PC-3 (cell line): ENCODE measurements at regions of chr5 and their contacts with region 1.

Region 1: DNA sequence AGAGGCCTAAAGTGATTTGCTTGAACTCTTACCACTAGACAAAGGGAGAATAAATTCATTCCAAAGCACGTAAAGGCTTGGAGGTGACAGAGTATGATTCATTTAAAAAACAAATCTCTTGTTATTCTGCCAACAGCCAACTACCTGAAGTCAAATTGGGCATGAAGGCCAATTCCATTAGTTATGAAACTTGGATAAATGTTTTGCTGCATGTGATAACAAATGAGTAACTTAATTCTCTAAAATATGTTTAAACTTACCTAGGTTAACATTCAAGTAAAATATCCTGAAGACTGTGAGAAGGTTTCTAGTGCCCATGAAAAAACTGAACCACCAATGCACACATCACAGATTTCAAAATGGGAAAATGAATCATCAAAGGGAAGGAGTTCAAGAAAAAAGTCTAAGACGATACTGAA is 120.1 kb upstream of the TSLP start:
- DNase-seq: peak; percentile 77
- ATAC-seq: peak; percentile 73
- H3K4me3 ChIP-seq: no peak overlapping the region
- H3K27ac ChIP-seq: peak overlapping the region; percentile 79
- H3K4me1 ChIP-seq: peaks cover 24% of the 10 kb centered on the region
- H3K27me3 ChIP-seq: no peaks in the 10 kb centered on the region
- CTCF ChIP-seq: no peak

Region 2: GRCh38 chr5:110707260-110707844 is 244.0 kb before region 1 on chr5:
- CTCF ChIA-PET with region 1: no interaction called
- POLR2A ChIA-PET with region 1: no interaction called
- intact Hi-C with region 1: no loop called
- DNase-seq: peak; percentile 15
- ATAC-seq: 0 out of 2 replicates have a peak, but pooled peaks have one; percentile 17
- H3K4me3 ChIP-seq: no peak overlapping the region
- H3K27ac ChIP-seq: no peak overlapping the region
- H3K4me1 ChIP-seq: no peaks in the 10 kb centered on the region
- H3K27me3 ChIP-seq: peaks cover 11% of the 10 kb centered on the region; the same call in 1 of the 2 replicates
- CTCF ChIP-seq: no peak

Region 3: GRCh38 chr5:110916381-110917049 is 34.9 kb before region 1 on chr5:
- CTCF ChIA-PET with region 1: no interaction called
- POLR2A ChIA-PET with region 1: no interaction called
- intact Hi-C with region 1: loop called (anchors 1 kb)
- DNase-seq: peak; percentile 90
- ATAC-seq: peak; percentile 98
- H3K4me3 ChIP-seq: peak overlapping the region; percentile 42; the same call in 1 of the 2 replicates
- H3K27ac ChIP-seq: peak overlapping the region; percentile 37
- H3K4me1 ChIP-seq: peaks cover 26% of the 10 kb centered on the region
- H3K27me3 ChIP-seq: no peaks in the 10 kb centered on the region
- CTCF ChIP-seq: no peak